Panc1 (cell line): ENCODE measurements at regions of chr4 and their contacts with region 1.

Region 1: GRCh38 chr4:155809835-155810234 is 51.0 kb downstream of the GUCY1B1 start:
- DNase-seq: peak; percentile 35
- ATAC-seq: no peak
- H3K4me3 ChIP-seq: no peak overlapping the region
- H3K27ac ChIP-seq: no peak overlapping the region
- H3K4me1 ChIP-seq: no peaks in the 10 kb centered on the region
- H3K27me3 ChIP-seq: no peaks in the 10 kb centered on the region
- CTCF ChIP-seq: peak; percentile 52; the same call in 1 of the 2 replicates

Region 2: GRCh38 chr4:155953151-155954114 is 143.6 kb after region 1 on chr4 and contains the start of gene CTSO:
- CTCF ChIA-PET with region 1: no interaction called
- POLR2A ChIA-PET with region 1: no interaction called
- in situ Hi-C with region 1: no loop called
- intact Hi-C with region 1: loop called (anchors 1 kb)
- DNase-seq: peak; percentile 59
- ATAC-seq: peak; percentile 99
- H3K4me3 ChIP-seq: peak within 1 kb of the TSS; percentile 53 to 89
- H3K27ac ChIP-seq: peak within 1 kb of the TSS; percentile 83
- H3K4me1 ChIP-seq: no peaks in the 10 kb centered on the region
- H3K27me3 ChIP-seq: no peaks in the 10 kb centered on the region
- CTCF ChIP-seq: peak; percentile 67
- total RNA-seq, gene CTSO: 3.3 TPM

Region 3: GRCh38 chr4:156146571-156146970 is 336.7 kb after region 1 on chr4:
- CTCF ChIA-PET with region 1: no interaction called
- POLR2A ChIA-PET with region 1: no interaction called
- in situ Hi-C with region 1: no loop called
- intact Hi-C with region 1: no loop called
- DNase-seq: no peak
- ATAC-seq: no peak
- H3K4me3 ChIP-seq: no peak overlapping the region
- H3K27ac ChIP-seq: no peak overlapping the region
- H3K4me1 ChIP-seq: no peaks in the 10 kb centered on the region
- H3K27me3 ChIP-seq: no peaks in the 10 kb centered on the region
- CTCF ChIP-seq: no peak